CD4-positive, alpha-beta memory T cell (primary cell): ENCODE measurements at regions of chr10 and their contacts with region 1.

Region 1: GRCh38 chr10:71314028-71314693 is 4.9 kb upstream of the SLC29A3 start:
- DNase-seq: peak; percentile 42 to 54 (median 48)
- H3K4me3 ChIP-seq: no peak overlapping the region
- H3K4me3 Mint-ChIP-seq: no peak overlapping the region
- H3K27ac ChIP-seq: no peak overlapping the region
- H3K27ac Mint-ChIP-seq: no peak overlapping the region
- H3K4me1 ChIP-seq: peaks cover 11% of the 10 kb centered on the region
- H3K4me1 Mint-ChIP-seq: peaks cover 6 to 18% (median 12%) of the 10 kb centered on the region in 4 donors
- H3K27me3 ChIP-seq: no peaks in the 10 kb centered on the region
- H3K27me3 Mint-ChIP-seq: peaks cover 4 to 7% of the 10 kb centered on the region in 2 donors

Region 2: DNA sequence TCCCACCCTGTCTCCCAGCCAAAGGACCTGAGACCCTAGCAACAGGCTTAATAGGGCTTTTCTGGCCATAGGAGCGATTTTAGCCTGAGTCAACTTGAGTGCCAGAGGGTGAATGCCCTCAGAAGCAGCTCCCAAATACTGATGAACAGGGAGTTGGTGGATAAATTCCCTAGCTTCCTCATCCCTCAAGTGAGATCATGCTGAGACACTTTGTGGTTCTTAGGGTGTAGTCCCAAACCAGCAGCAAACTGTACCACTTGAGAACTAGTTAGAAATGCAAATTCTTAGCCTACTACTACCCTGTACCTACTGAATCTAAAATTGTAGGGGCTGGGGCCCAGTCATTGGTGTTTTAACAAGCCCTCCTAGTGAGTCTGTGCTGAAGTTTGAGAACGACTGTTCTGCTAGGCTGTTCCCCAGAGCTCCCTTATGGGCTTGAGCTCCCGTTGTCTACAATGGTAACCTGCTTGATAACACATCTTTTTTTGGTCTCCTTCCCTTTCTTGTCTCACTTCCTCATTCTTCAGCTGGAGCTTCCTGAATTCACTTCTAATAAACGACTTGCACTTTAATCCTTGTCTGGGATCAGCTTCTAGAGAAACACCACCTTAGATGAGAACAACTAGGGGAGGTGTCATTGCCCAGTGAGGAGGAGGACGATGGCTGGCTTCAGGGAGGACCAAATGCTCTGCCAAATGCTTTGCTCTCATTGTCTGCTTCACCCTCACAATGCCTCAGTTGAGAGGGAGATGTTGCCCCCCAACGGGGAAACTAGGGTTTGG is 64.4 kb after region 1 on chr10:
- CTCF ChIA-PET with region 1: interaction called, 23 read pairs
- POLR2A ChIA-PET with region 1: interaction called, 17 read pairs
- intact Hi-C with region 1: loop called (anchors 1 kb)
- DNase-seq: no peak
- H3K4me3 ChIP-seq: no peak overlapping the region
- H3K4me3 Mint-ChIP-seq: peak overlapping the region in 2 of 8 donors; percentile 8 to 17
- H3K27ac ChIP-seq: no peak overlapping the region
- H3K27ac Mint-ChIP-seq: no peak overlapping the region
- H3K4me1 ChIP-seq: no peaks in the 10 kb centered on the region
- H3K4me1 Mint-ChIP-seq: peaks cover 4 to 15% (median 7%) of the 10 kb centered on the region in 4 donors
- H3K27me3 ChIP-seq: no peaks in the 10 kb centered on the region
- H3K27me3 Mint-ChIP-seq: peaks cover 0 to 5% of the 10 kb centered on the region in 2 donors

Region 3: GRCh38 chr10:71383972-71384687 is 70.0 kb after region 1 on chr10:
- CTCF ChIA-PET with region 1: interaction called, 23 read pairs
- POLR2A ChIA-PET with region 1: no interaction called
- intact Hi-C with region 1: loop called (anchors 1 kb)
- DNase-seq: peak; percentile 56 to 67 (median 60)
- H3K4me3 ChIP-seq: no peak overlapping the region
- H3K4me3 Mint-ChIP-seq: no peak overlapping the region
- H3K27ac ChIP-seq: no peak overlapping the region
- H3K27ac Mint-ChIP-seq: no peak overlapping the region
- H3K4me1 ChIP-seq: no peaks in the 10 kb centered on the region
- H3K4me1 Mint-ChIP-seq: peaks cover 0 to 3% (median 0%) of the 10 kb centered on the region in 4 donors
- H3K27me3 ChIP-seq: no peaks in the 10 kb centered on the region
- H3K27me3 Mint-ChIP-seq: peaks cover 2 to 3% of the 10 kb centered on the region in 2 donors

Region 4: GRCh38 chr10:71429929-71430328 is 115.8 kb after region 1 on chr10:
- CTCF ChIA-PET with region 1: no interaction called
- POLR2A ChIA-PET with region 1: no interaction called
- intact Hi-C with region 1: no loop called
- DNase-seq: no peak
- H3K4me3 ChIP-seq: no peak overlapping the region
- H3K4me3 Mint-ChIP-seq: no peak overlapping the region
- H3K27ac ChIP-seq: no peak overlapping the region
- H3K27ac Mint-ChIP-seq: no peak overlapping the region
- H3K4me1 ChIP-seq: no peaks in the 10 kb centered on the region
- H3K4me1 Mint-ChIP-seq: peaks cover 0 to 4% (median 0%) of the 10 kb centered on the region in 4 donors
- H3K27me3 ChIP-seq: no peaks in the 10 kb centered on the region
- H3K27me3 Mint-ChIP-seq: peaks cover 0 to 23% of the 10 kb centered on the region in 2 donors

Region 5: GRCh38 chr10:71564194-71564820 is 250.1 kb after region 1 on chr10:
- CTCF ChIA-PET with region 1: interaction called, 117 read pairs
- POLR2A ChIA-PET with region 1: no interaction called
- intact Hi-C with region 1: no loop called
- DNase-seq: no peak
- H3K4me3 ChIP-seq: no peak overlapping the region
- H3K4me3 Mint-ChIP-seq: no peak overlapping the region
- H3K27ac ChIP-seq: no peak overlapping the region
- H3K27ac Mint-ChIP-seq: no peak overlapping the region
- H3K4me1 ChIP-seq: no peaks in the 10 kb centered on the region
- H3K4me1 Mint-ChIP-seq: no peaks in the 10 kb centered on the region
- H3K27me3 ChIP-seq: no peaks in the 10 kb centered on the region
- H3K27me3 Mint-ChIP-seq: peaks cover 13 to 14% of the 10 kb centered on the region in 2 donors

Region 6: DNA sequence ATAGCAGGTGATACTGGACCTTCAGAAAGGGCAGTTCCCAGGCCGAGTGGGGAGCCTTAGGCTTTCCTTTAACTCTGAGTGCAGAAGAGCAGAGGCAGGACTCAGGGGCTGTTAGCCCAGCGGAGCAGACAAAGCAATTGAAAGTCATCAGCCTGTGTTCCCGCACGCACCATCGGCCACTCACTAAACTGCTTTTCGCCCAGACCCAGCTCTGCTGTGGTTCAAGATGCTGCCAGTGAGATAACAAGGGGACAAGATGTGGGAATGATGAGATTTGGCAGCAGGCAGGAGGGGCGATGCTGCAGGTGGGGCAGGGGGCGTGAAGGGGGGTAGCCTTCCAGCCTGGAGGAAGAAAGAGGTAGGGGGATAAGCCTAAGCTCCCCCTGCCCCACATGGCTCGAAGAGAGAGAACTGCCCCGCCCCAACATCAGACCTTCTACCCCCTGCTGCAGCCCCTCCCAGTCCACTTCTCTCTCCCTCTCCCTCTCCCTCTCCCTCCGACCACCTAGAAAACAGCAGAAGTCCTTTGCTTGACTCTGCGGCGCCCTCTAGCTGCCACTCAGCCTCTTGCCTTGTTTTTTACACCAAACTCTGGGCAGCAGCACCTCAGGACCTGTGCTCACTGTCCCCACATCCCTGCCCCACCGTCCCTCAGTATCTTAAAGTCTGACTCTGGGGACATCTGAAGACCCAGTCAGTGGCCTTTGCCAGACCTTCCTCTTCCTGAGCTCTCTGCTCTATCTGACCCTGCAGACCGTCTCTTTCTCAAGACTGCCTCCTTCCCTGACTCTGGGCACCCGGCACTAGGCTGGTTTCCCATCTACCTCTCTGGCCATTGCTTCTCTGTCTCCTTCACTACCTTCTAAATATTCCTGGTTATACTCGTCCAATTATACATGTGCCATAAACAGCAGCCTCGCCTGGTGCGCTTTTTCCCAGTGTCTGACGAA is 294.9 kb after region 1 on chr10:
- CTCF ChIA-PET with region 1: interaction called, 9 read pairs
- POLR2A ChIA-PET with region 1: no interaction called
- intact Hi-C with region 1: loop called (anchors 1 kb)
- DNase-seq: peak; percentile 28 to 48 (median 40)
- H3K4me3 ChIP-seq: no peak overlapping the region
- H3K4me3 Mint-ChIP-seq: no peak overlapping the region
- H3K27ac ChIP-seq: no peak overlapping the region
- H3K27ac Mint-ChIP-seq: no peak overlapping the region
- H3K4me1 ChIP-seq: no peaks in the 10 kb centered on the region
- H3K4me1 Mint-ChIP-seq: peaks cover 0 to 4% (median 0%) of the 10 kb centered on the region in 4 donors
- H3K27me3 ChIP-seq: no peaks in the 10 kb centered on the region
- H3K27me3 Mint-ChIP-seq: peaks cover 3 to 9% of the 10 kb centered on the region in 2 donors

Region 7: DNA sequence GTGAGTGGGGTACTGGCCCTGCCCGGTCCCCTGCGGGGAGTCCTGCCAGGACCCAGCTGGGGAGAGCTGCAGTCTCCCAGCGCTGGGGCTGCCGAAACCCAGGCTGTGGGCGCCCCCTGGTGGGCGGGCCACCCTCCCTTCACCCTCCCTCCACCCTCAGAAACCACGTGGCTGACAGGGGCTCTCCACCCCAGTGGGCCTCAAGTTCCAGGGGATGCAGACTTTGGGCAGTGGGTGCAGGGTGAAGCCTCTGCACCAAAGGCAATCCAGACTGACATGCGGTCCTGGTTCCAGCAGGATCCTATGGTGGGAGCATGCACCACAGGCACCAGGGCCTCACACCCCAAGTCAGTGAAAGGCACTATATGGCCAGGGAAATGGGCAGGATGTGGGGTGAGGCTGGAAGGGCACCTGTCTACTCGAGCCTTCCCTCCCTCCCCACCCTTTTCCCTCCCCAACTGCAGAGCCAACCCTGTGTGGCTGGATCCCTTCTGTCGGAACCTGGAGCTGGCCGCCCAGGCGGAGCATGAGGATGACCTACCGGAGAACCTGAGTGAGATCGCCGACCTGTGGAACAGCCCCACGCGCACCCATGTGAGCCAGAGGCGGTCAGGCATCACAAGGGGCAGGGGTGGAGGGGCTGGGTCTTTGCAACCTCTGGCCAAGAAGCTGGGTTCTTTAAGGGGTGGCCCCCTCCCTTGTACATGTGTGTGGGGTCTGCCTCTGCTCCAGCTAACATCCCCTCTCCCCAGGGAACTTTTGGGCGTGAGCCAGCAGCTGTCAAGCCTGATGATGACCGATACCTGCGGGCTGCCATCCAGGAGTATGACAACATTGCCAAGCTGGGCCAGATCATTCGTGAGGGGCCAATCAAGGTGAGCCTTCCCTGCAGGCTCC is 498.1 kb after region 1 on chr10:
- CTCF ChIA-PET with region 1: interaction called, 13 read pairs
- POLR2A ChIA-PET with region 1: no interaction called
- intact Hi-C with region 1: loop called (anchors 1 kb)
- DNase-seq: peak; percentile 63 to 78 (median 75)
- H3K4me3 ChIP-seq: no peak overlapping the region
- H3K4me3 Mint-ChIP-seq: no peak overlapping the region
- H3K27ac ChIP-seq: no peak overlapping the region
- H3K27ac Mint-ChIP-seq: no peak overlapping the region
- H3K4me1 ChIP-seq: no peaks in the 10 kb centered on the region
- H3K4me1 Mint-ChIP-seq: peaks cover 0 to 2% (median 0%) of the 10 kb centered on the region in 4 donors
- H3K27me3 ChIP-seq: no peaks in the 10 kb centered on the region
- H3K27me3 Mint-ChIP-seq: no peaks in the 10 kb centered on the region

Region 8: DNA sequence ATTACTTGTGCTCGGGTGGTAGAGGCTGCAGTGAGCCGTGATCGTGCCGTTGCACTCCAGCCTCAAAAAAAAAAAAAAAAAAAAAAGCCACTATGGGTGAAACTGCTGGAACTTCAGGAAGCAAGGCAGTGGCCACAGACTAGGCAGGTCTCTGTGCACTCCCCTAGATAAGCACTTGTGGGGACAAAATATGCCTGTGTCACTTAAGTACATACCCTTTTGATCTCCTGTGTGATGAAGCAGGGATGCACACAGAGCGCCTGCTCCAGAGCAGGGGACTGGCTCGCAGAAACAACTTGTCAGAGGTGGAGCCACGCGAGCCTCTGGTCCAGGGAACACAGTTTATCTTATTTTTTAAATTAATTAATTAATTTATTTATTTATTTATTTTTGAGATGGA is 579.8 kb after region 1 on chr10:
- CTCF ChIA-PET with region 1: interaction called, 5 read pairs
- POLR2A ChIA-PET with region 1: no interaction called
- intact Hi-C with region 1: loop called (anchors 1 kb)
- DNase-seq: no peak
- H3K4me3 ChIP-seq: no peak overlapping the region
- H3K4me3 Mint-ChIP-seq: no peak overlapping the region
- H3K27ac ChIP-seq: no peak overlapping the region
- H3K27ac Mint-ChIP-seq: no peak overlapping the region
- H3K4me1 ChIP-seq: peaks cover 9% of the 10 kb centered on the region
- H3K4me1 Mint-ChIP-seq: peaks cover 2 to 12% (median 6%) of the 10 kb centered on the region in 4 donors
- H3K27me3 ChIP-seq: no peaks in the 10 kb centered on the region
- H3K27me3 Mint-ChIP-seq: peaks cover 1 to 7% of the 10 kb centered on the region in 2 donors